Endothelial cell of umbilical vein (primary cell): ENCODE measurements at regions of chr11 and their contacts with region 1.

Region 1: GRCh38 chr11:49995565-49995964 is 13.2 kb upstream of the OR4C12 start:
- DNase-seq: peak; percentile 6
- H3K4me3 ChIP-seq: no peak overlapping the region
- H3K27ac ChIP-seq: no peak overlapping the region
- H3K4me1 ChIP-seq: no peaks in the 10 kb centered on the region
- H3K27me3 ChIP-seq: no peaks in the 10 kb centered on the region
- CTCF ChIP-seq: peak; percentile 38 to 48
- POLR2A ChIP-seq: no peak

Region 2: GRCh38 chr11:48116437-48117228 is 1878.9 kb before region 1 on chr11:
- CTCF ChIA-PET with region 1: interaction called, 12 read pairs
- POLR2A ChIA-PET with region 1: no interaction called
- dilution Hi-C with region 1: no loop called
- intact Hi-C with region 1: no loop called
- DNase-seq: peak; percentile 39
- H3K4me3 ChIP-seq: no peak overlapping the region
- H3K27ac ChIP-seq: no peak overlapping the region
- H3K4me1 ChIP-seq: no peaks in the 10 kb centered on the region
- H3K27me3 ChIP-seq: no peaks in the 10 kb centered on the region
- CTCF ChIP-seq: peak; percentile 49 to 54
- POLR2A ChIP-seq: no peak

Region 3: DNA sequence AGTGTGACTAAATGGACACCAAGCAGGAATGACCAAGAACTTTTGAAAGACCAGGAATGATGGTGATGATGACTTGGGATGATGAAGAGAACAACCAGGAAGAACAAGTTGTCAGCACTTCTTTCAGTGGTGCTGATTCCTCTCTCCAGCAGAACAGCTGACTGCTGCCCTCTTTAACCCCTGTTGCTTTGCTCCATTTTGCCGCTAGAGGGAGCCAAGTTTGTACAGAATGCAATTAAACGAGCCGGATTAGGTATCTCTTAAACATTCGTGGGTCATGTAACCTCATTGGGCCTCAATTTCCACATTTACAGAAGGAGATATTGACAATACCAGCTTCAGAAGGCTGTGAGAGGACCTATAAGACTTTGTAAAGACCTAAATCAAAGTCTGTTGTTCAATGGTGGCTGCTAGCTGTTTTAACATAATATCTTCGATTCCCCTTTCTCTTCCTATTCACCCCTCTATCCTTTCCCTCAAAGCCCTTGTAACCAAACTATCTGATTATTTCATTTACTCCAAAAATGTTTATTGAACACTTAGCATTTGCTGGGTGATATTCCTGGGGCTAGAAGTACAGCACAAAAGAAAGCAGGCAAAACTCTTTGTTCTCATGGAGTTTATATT is 1687.7 kb before region 1 on chr11:
- CTCF ChIA-PET with region 1: interaction called, 8 read pairs
- POLR2A ChIA-PET with region 1: no interaction called
- dilution Hi-C with region 1: no loop called
- intact Hi-C with region 1: loop called (anchors 2 kb)
- DNase-seq: peak; percentile 45
- H3K4me3 ChIP-seq: no peak overlapping the region
- H3K27ac ChIP-seq: no peak overlapping the region
- H3K4me1 ChIP-seq: no peaks in the 10 kb centered on the region
- H3K27me3 ChIP-seq: no peaks in the 10 kb centered on the region
- CTCF ChIP-seq: peak; percentile 71 to 89
- POLR2A ChIP-seq: no peak

Region 4: GRCh38 chr11:49230511-49230910 is 765.1 kb before region 1 on chr11:
- CTCF ChIA-PET with region 1: no interaction called
- POLR2A ChIA-PET with region 1: no interaction called
- dilution Hi-C with region 1: no loop called
- intact Hi-C with region 1: loop called (anchors 5 kb)
- DNase-seq: peak; percentile 37
- H3K4me3 ChIP-seq: no peak overlapping the region
- H3K27ac ChIP-seq: no peak overlapping the region
- H3K4me1 ChIP-seq: peaks cover 4% of the 10 kb centered on the region
- H3K27me3 ChIP-seq: no peaks in the 10 kb centered on the region
- CTCF ChIP-seq: no peak
- POLR2A ChIP-seq: no peak

Region 5: GRCh38 chr11:50088231-50088630 is 92.7 kb after region 1 on chr11:
- CTCF ChIA-PET with region 1: no interaction called
- POLR2A ChIA-PET with region 1: no interaction called
- dilution Hi-C with region 1: no loop called
- intact Hi-C with region 1: no loop called
- DNase-seq: no peak
- H3K4me3 ChIP-seq: no peak overlapping the region
- H3K27ac ChIP-seq: no peak overlapping the region
- H3K4me1 ChIP-seq: no peaks in the 10 kb centered on the region
- H3K27me3 ChIP-seq: no peaks in the 10 kb centered on the region
- CTCF ChIP-seq: no peak
- POLR2A ChIP-seq: no peak